Activated naive CD4-positive, alpha-beta T cell treated with anti-CD3 and anti-CD28 coated beads, Interleukin-2, amount 10 ng/mL, durations not matched to agents 7 days and 5 days (primary cell): ENCODE measurements at regions of chr16 and their contacts with region 1.

Region 1: DNA sequence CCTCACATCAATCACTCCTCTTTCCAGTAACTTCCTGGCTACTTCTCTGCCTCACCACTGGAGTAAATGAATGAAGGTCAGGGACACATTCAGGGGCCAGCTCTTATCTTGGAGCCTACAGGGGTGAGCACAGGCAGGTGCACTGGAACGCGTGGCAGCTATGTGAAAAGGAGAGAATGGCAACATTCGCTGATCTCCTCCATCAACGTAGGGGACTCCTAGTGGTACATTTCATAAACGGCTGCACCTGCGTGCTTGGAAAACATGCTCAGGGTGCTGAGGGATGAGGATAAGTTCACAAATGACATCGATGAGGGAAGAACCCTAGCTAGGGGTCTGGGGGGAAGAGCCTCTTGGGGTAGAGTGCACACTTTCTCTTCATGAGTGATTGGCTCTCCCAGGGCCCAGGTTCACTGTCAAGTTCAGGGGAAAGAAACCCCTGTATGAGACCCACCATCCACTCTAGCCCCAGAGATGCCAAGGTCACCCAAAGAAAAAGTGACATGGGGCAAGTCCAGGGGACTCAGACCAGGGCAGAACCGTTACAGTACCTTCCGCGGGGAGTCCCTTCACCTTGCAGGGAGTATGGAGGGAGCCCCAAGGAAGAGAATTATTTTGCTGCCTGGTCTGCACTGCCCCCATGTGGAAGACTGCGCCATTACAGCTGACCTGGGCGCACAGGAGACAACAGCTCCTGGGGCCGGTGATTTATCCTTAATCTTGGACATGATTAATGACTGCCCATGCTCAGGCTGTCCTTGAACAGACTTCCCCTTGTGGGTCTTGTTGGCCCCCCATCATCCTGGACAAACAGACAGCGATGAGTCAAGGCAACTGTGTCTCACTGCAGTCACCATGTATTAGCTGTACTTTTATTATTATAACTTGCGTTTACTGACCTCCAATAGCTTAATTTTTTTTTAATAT is 30.1 kb downstream of the VAC14 start:
- DNase-seq: peak; percentile 82
- H3K4me3 Mint-ChIP-seq: no peak overlapping the region
- H3K27ac Mint-ChIP-seq: peak overlapping the region; percentile 39
- H3K4me1 Mint-ChIP-seq: peaks cover 11% of the 10 kb centered on the region
- H3K27me3 Mint-ChIP-seq: no peaks in the 10 kb centered on the region

Region 2: DNA sequence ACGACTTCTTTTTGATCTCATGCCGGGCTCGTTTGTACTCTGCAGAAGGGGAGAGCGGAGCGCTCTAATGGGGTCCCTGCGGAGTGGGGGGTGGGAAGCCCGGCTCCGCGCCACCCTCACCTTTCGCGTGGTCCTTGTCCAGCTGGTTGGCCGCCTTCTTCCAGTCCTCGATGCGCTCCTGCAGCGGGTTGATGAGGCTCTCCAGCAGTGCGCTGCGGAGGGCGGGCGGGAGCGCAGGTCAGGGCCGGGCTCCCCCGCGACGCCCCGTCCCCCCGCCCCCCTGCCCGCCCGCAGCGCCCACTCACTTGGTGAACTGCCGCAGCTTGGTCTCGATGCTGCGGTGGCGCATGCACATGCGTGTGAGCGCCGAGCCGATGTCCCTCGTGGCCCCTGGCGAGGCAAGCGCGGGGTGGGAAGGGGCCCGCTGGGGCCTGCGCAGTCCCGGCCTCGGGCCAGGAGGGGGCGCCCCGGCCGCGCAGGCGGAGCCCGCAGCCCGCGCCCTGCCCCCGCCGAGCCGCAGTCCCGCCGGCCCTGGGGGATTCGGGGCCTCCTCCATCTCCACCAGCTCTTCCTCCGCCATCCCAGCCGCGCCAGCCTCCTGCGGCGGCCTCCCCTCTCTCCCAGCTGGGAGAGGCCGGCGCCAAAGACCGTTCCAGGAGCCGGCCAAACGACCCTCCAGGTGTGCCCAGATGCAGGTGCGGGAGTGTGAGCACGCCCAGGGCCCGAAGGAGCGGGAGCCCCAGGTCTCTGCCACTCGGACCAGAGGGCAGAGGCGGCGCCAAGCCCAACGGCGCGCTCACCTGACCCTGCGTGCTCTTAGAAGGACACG is 91.0 kb before region 1 on chr16:
- CTCF ChIA-PET with region 1: interaction called, 87 read pairs
- DNase-seq: no peak
- H3K4me3 Mint-ChIP-seq: no peak overlapping the region
- H3K27ac Mint-ChIP-seq: no peak overlapping the region
- H3K4me1 Mint-ChIP-seq: peaks cover 21% of the 10 kb centered on the region
- H3K27me3 Mint-ChIP-seq: peaks cover 25% of the 10 kb centered on the region

Region 3: DNA sequence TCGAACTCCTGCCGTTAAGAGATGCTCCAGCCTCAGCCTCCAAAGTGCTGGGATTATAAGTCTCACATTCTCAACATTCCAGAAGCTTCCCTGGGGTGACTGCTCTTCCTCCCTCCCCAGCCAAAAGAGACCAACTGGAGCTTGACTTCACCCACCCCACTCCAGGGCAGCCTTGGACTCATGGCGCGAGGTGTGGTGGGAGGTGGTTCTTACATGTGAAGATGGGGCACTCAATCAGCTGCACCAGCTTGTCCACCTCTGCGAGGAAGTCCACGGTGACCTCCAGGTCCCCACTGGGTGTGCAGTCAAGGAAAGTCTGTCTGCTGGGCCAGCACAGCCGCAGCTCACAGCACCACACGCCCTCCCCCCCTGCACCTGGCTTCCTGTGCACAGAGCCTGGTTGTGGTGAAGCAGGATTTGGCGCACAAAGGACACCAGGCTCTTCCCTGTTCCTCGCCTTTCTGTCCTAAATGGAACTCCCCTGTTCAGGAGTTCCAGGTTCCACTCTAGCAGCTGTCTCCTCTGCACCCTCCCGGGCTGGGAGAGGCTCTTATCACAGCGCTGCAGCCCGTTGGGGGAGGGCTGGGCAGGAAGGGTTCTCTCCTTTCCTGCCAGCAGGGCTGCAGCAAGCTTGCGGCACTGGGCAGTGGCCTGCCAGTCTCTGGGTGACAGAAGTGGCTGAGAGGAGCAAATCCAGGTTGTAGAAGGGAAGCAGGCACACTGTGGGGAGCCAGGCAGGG is 75.4 kb before region 1 on chr16:
- CTCF ChIA-PET with region 1: interaction called, 37 read pairs
- DNase-seq: peak; percentile 70
- H3K4me3 Mint-ChIP-seq: peak overlapping the region; percentile 64
- H3K27ac Mint-ChIP-seq: peak overlapping the region; percentile 95
- H3K4me1 Mint-ChIP-seq: peaks cover 46% of the 10 kb centered on the region
- H3K27me3 Mint-ChIP-seq: no peaks in the 10 kb centered on the region

Region 4: GRCh38 chr16:70720430-70721201 is 50.3 kb before region 1 on chr16:
- CTCF ChIA-PET with region 1: no interaction called
- DNase-seq: no peak
- H3K4me3 Mint-ChIP-seq: no peak overlapping the region
- H3K27ac Mint-ChIP-seq: no peak overlapping the region
- H3K4me1 Mint-ChIP-seq: no peaks in the 10 kb centered on the region
- H3K27me3 Mint-ChIP-seq: no peaks in the 10 kb centered on the region

Region 5: DNA sequence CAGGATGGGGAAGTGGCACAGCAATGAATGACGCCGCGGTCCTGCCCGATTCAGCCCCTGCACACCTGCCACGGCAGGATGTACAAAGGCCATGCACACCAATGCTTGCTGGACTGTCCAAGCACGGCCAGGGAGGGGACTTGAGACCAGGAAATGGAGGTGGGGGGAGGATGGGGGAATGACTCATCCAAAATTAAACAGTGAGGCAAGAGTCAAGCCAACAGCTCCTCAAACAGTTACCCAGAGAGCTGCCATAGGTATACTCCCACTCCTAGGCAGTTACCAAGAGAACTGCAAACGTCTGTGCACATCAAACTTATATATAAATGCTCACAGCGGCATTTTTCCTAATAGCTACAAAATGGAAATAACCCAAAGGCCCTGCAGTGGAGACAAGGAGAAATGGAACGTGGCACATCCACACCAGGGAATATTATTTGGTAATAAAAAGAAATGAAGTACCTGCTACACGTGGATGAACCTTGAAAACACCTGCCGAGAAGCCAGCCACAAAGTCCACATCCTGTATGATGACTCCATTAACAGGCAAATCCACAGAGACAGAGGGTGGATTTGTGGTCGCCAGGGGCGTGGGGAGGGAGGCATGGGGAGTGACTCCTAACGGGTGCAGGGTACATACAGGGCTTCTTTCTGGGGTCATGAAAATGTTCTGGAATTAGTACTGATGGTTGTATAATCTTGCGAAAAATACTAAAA is 24.0 kb before region 1 on chr16:
- CTCF ChIA-PET with region 1: interaction called, 12 read pairs
- DNase-seq: peak; percentile 88
- H3K4me3 Mint-ChIP-seq: peak overlapping the region; percentile 45
- H3K27ac Mint-ChIP-seq: peak overlapping the region; percentile 98
- H3K4me1 Mint-ChIP-seq: peaks cover 90% of the 10 kb centered on the region
- H3K27me3 Mint-ChIP-seq: no peaks in the 10 kb centered on the region